Heart right ventricle (tissue), 16 donors: ENCODE measurements at regions of chr17 and their contacts with region 1.

Region 1: GRCh38 chr17:42677008-42677857 is 439 bp upstream of the PLEKHH3 start:
- DNase-seq: peak; percentile 100
- ATAC-seq: peak; percentile 72 to 89 (median 74)
- H3K4me3 ChIP-seq: peak overlapping the region; percentile 72 to 99 (median 94)
- H3K27ac ChIP-seq: peak overlapping the region; percentile 70 to 98 (median 96)
- H3K4me1 ChIP-seq: peaks cover 34 to 84% (median 73%) of the 10 kb centered on the region in 9 donors
- H3K27me3 ChIP-seq: peaks cover 0 to 56% (median 0%) of the 10 kb centered on the region in 7 donors
- CTCF ChIP-seq: peak in 1 of 9 donors; percentile 1

Region 2: DNA sequence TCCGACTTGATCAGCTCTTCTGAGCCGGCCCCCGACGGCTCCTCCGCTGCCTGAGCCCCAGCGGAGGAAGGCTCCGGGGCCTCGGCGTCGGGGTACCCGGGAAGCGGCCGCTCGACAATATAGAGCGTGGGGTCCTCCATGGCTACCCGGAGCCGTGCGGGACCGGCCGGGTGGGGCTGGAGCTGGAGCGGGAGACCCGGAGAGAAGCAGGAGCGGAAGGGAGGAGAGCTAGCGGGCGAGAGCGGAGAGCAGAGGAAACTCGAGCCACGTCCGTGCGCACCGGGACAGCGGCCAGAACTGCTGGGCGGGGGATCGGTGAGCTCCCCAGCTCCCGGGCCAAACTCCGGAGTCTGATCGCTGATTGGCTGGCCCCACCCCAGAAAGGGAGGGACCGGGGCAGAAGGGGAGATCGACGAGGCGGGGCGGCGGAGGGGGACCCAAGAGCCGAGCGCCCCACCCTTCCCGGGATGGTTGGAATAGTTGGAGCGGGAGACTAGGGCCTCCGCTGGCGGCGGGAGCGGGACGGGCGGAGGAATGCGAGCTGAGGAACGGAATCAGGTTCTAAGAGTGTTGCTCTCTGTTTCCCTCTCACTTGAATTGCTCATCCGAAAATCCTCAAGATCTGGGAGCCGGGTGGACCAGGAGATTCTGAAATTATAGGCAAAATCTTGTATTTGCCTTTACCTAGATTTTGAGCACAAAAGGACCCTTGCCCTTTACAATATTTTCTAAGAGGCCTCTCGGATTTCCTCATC is 254.1 kb before region 1 on chr17 and contains the start of gene CAVIN1:
- intact Hi-C with region 1: loop called in 1 of 10 experiments (anchors 5 kb)
- DNase-seq: peak; percentile 100
- ATAC-seq: peak; percentile 91 to 96 (median 92)
- H3K4me3 ChIP-seq: peak within 1 kb of the TSS; percentile 79 to 100 (median 96)
- H3K27ac ChIP-seq: peak within 1 kb of the TSS; percentile 95 to 100 (median 99)
- H3K4me1 ChIP-seq: peaks cover 6 to 64% (median 39%) of the 10 kb centered on the region in 9 donors
- H3K27me3 ChIP-seq: peaks cover 0 to 54% (median 0%) of the 10 kb centered on the region in 7 donors
- CTCF ChIP-seq: peak in 2 of 9 donors; percentile 19 to 21
- total RNA-seq, gene CAVIN1: 176 to 300 (median 241) TPM

Region 3: GRCh38 chr17:42536048-42536371 is 141.2 kb before region 1 on chr17 and contains the start of gene NAGLU:
- intact Hi-C with region 1: loop called in 1 of 10 experiments (anchors 1 kb)
- DNase-seq: peak; percentile 96 to 99
- ATAC-seq: peak; percentile 87 to 94 (median 92)
- H3K4me3 ChIP-seq: peak within 1 kb of the TSS; percentile 30 to 88 (median 72)
- H3K27ac ChIP-seq: peak within 1 kb of the TSS; percentile 79 to 98 (median 86)
- H3K4me1 ChIP-seq: peaks cover 3 to 38% (median 25%) of the 10 kb centered on the region in 9 donors
- H3K27me3 ChIP-seq: no peaks in the 10 kb centered on the region
- CTCF ChIP-seq: no peak
- total RNA-seq, gene NAGLU: 6.8 to 16.0 (median 9.8) TPM

Region 4: DNA sequence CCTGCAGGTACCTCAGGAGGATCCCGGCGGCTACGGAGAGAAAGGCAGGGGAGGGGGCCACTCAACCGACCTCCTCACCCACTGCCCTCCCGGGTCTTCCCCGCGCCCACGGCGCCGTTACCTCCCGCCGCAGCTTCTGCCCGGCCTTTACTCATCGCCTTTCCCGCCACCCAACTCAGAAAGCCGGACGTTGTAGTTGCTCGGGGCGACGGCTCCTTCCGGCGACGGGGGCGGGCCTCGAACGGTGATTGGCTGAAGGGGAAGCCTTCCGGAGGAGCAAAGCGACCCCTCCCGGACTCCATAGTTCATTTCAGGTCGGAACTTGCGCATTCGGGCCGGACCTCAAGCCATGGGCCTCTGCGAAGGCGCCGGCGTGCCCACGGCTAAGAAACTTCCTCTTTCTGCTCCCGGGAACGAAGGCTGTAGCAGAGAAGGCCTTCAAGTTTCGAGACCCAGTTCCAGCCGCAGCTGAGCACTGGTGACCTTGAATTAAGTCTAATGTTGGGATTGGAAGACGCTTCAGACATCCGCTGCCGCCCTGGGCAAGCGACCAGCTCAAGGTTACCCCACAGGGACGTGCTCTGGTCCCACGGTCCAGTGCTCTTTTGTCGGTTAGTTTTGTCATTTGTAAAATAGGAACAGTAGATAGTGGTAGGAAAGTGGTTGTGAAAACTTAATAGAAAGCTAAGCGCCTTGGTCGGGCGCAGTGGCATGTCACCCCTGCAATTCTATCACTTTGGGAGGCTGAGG is 99.5 kb before region 1 on chr17 and contains the start of gene PSMC3IP:
- intact Hi-C with region 1: loop called (anchors 1 to 10 kb)
- DNase-seq: peak; percentile 95 to 97
- ATAC-seq: peak; percentile 92 to 98 (median 96)
- H3K4me3 ChIP-seq: peak within 1 kb of the TSS; percentile 48 to 86 (median 69)
- H3K27ac ChIP-seq: peak within 1 kb of the TSS; percentile 33 to 96 (median 94)
- H3K4me1 ChIP-seq: peaks cover 10 to 46% (median 23%) of the 10 kb centered on the region in 9 donors
- H3K27me3 ChIP-seq: no peaks in the 10 kb centered on the region
- CTCF ChIP-seq: peak in 7 of 9 donors; percentile 19 to 59 (median 43)
- total RNA-seq, gene PSMC3IP: 1.1 to 3.1 (median 1.6) TPM

Region 5: GRCh38 chr17:42586514-42587230 is 90.6 kb before region 1 on chr17:
- intact Hi-C with region 1: loop called in 1 of 10 experiments (anchors 10 kb)
- DNase-seq: no peak
- ATAC-seq: no peak
- H3K4me3 ChIP-seq: no peak overlapping the region
- H3K27ac ChIP-seq: peak overlapping the region in 4 of 10 donors; percentile 11 to 44 (median 29)
- H3K4me1 ChIP-seq: peaks cover 0 to 34% (median 17%) of the 10 kb centered on the region in 9 donors
- H3K27me3 ChIP-seq: no peaks in the 10 kb centered on the region
- CTCF ChIP-seq: no peak

Region 6: DNA sequence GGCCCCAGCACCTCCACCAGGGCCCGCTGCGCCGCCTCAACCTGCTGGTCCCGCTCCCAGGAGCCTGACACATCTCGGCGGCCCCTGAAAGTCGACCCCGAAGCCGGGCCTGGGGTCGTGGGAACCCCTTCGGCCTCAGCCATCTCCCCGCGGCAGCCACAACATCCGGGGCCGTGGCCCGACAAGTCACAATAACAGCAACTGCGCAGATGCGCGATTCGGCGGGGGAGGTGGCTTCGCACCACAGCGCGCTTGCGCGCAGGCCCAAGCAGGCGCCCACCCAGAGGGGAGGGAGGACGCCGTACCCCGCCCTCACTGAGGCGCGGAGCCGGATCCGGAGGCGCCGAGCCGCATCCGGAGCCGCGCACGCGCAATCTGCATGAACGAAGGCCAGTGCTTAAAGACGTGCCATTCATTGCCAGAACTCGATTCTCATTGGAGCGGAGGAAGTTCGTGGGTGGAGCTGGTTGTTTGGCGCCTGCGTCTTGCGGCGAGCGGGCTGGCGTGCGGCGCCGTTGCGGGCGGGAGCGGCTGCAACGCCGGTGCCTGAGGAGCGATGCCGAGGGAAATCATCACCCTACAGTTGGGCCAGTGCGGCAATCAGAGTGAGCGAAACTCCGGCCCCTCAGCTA is 67.9 kb before region 1 on chr17 and contains the starts of genes RETREG3 and TUBG1:
- intact Hi-C with region 1: loop called in 6 of 10 experiments (anchors 2 to 10 kb)
- DNase-seq: peak; percentile 98 to 99
- ATAC-seq: peak; percentile 96 to 99 (median 98)
- H3K4me3 ChIP-seq: peak within 1 kb of the TSS; percentile 60 to 97 (median 80)
- H3K27ac ChIP-seq: peak within 1 kb of the TSS; percentile 65 to 96 (median 91)
- H3K4me1 ChIP-seq: peaks cover 6 to 54% (median 44%) of the 10 kb centered on the region in 9 donors
- H3K27me3 ChIP-seq: no peaks in the 10 kb centered on the region
- CTCF ChIP-seq: peak in 7 of 9 donors; percentile 21 to 67 (median 35)
- total RNA-seq, gene RETREG3: 18.5 to 29.9 (median 25.2) TPM
- total RNA-seq, gene TUBG1: 28.2 to 59.8 (median 43.7) TPM

Region 7: GRCh38 chr17:42618442-42619150 is 58.6 kb before region 1 on chr17:
- intact Hi-C with region 1: loop called in 2 of 10 experiments (anchors 5 to 10 kb)
- DNase-seq: peak; percentile 48 to 70
- ATAC-seq: peak; percentile 87 to 98 (median 94)
- H3K4me3 ChIP-seq: peak overlapping the region in 3 of 10 donors; percentile 1 to 26 (median 15)
- H3K27ac ChIP-seq: peak overlapping the region; percentile 12 to 83 (median 73)
- H3K4me1 ChIP-seq: peaks cover 0 to 22% (median 16%) of the 10 kb centered on the region in 9 donors
- H3K27me3 ChIP-seq: no peaks in the 10 kb centered on the region
- CTCF ChIP-seq: peak in 7 of 9 donors; percentile 23 to 58 (median 34)

Region 8: DNA sequence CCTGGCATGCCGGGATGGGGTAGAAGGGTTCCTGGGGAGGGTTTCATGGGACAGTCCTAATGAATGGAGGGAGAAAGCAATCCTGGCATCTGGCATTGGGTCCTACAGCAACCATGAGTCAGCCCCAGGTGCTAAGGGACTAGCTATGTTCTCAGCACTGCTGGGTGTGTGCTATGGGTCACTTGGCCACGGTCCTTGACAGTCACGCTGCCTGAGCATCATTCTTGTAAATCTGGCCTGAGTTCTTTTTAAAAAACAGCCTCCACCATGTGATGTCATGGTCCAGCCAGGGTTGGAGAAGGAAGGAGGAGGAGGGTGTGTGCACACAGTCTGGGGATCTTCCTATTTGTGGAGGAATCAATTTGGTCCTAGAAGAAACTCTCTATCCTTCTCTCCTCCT is 77.5 kb after region 1 on chr17:
- intact Hi-C with region 1: no loop called
- DNase-seq: peak; percentile 26 to 45
- ATAC-seq: peak in 7 of 8 donors; percentile 55 to 90 (median 73)
- H3K4me3 ChIP-seq: no peak overlapping the region
- H3K27ac ChIP-seq: peak overlapping the region in 3 of 10 donors; percentile 17 to 47 (median 43)
- H3K4me1 ChIP-seq: peaks cover 0 to 32% (median 18%) of the 10 kb centered on the region in 9 donors
- H3K27me3 ChIP-seq: peaks cover 0 to 3% (median 0%) of the 10 kb centered on the region in 7 donors
- CTCF ChIP-seq: no peak

Region 9: GRCh38 chr17:43104665-43105064 is 427.4 kb after region 1 on chr17:
- intact Hi-C with region 1: no loop called
- DNase-seq: no peak
- ATAC-seq: no peak
- H3K4me3 ChIP-seq: no peak overlapping the region
- H3K27ac ChIP-seq: no peak overlapping the region
- H3K4me1 ChIP-seq: peaks cover 0 to 6% (median 0%) of the 10 kb centered on the region in 9 donors
- H3K27me3 ChIP-seq: no peaks in the 10 kb centered on the region
- CTCF ChIP-seq: no peak